ENCODE measurements at regions of chr2 and their contacts with region 1.

Region 1: DNA sequence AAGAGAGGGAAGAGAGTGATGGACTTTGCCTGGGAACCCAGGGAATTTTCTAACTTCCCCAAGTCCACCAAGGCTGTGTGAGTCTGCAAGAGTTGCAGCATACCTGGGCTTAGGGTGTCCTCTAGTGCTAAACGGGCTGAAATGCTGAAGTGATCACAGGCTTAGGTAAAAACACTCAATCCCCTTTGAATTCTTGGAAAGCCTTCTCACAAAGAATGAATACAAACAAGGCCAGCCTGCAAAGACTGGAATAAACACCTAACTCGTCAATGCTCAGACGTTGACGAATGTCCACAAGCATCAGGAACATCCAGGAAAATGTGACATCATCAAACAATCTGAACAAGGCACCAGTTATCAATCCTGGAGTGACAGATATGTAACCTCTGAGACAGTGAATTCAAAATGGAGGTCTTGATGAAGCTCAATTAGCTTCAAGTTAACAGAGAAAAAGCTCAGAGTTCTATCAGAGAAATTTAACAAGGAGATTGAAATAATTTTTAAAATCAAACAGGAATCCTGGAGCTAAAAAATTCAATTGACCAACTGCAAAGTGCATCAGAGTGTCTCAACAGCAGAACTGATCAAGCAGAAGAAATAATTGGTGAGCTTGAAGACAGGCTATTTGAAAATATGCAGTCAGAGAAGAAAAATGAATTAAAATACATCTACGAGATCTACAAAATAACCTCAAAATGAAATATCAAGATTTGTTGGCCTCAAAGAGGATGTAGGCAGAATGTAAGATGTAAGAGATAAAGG is 30.2 kb upstream of the BMP10 start:
- DNase-seq: no peak
- ATAC-seq: no peak
- H3K4me3 ChIP-seq: no peak overlapping the region
- H3K27ac ChIP-seq: no peak overlapping the region
- H3K4me1 ChIP-seq: no peaks in the 10 kb centered on the region
- H3K27me3 ChIP-seq: peaks cover 0 to 30% (median 22%) of the 10 kb centered on the region in 7 donors
- CTCF ChIP-seq: peak in 1 of 9 donors; percentile 15

Region 2: GRCh38 chr2:68846091-68846490 is 55.3 kb before region 1 on chr2:
- intact Hi-C with region 1: no loop called
- DNase-seq: no peak
- ATAC-seq: peak in 2 of 8 donors; percentile 9 to 44
- H3K4me3 ChIP-seq: no peak overlapping the region
- H3K27ac ChIP-seq: no peak overlapping the region
- H3K4me1 ChIP-seq: peaks cover 0 to 5% (median 0%) of the 10 kb centered on the region in 9 donors
- H3K27me3 ChIP-seq: peaks cover 0 to 60% (median 4%) of the 10 kb centered on the region in 7 donors
- CTCF ChIP-seq: no peak

Region 3: DNA sequence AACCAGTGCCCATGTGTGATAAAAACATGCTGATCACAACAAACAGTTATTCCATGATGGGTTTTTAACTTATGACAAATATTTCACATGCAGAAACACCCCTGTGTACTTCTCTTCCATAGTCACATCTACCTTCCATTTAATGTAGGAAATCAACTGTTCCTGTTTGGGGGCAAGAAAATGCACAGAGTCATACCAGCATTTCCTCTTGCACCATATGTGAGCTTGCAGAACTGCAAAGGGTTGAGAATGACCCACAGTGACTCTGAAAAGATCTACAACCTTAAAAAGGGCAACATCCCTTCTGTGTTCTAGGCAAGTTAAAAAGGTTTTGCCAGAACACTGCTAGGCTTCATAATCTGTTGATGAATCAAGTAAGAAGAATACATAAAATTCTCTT is 40.0 kb before region 1 on chr2:
- intact Hi-C with region 1: loop called in 1 of 10 experiments (anchors 5 kb)
- DNase-seq: no peak
- ATAC-seq: no peak
- H3K4me3 ChIP-seq: no peak overlapping the region
- H3K27ac ChIP-seq: peak overlapping the region in 1 of 10 donors; percentile 18
- H3K4me1 ChIP-seq: peaks cover 0 to 48% (median 0%) of the 10 kb centered on the region in 9 donors
- H3K27me3 ChIP-seq: peaks cover 0 to 85% (median 40%) of the 10 kb centered on the region in 7 donors
- CTCF ChIP-seq: no peak

Measured in heart right ventricle (tissue), 16 donors.